ENCODE measurements at regions of chr1 and their contacts with region 1.

Region 1: DNA sequence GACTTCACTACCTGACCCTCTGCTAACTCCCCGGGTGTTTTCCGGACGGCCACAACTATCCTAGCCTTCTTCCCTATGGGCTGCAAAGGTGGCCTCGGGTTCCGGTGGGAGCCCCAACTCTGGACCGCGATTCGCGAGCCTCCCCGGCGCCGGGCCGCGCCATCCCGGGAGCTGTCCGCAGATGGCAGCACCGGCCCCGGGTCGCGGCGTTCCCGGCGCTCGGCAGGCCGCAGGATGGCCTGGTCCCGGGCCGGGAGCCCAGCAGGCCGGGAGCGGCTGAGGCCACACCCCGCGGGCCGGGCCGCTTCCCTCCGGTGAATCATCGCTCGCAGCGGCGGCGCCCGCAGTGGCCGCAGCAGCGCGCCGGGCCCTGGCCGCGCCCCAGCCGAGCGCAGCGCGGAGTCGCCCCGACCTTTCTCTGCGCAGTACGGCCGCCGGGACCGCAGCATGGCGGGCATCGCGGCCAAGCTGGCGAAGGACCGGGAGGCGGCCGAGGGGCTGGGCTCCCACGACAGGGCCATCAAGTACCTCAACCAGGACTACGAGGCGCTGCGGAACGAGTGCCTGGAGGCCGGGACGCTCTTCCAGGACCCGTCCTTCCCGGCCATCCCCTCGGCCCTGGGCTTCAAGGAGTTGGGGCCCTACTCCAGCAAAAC is at the start of gene CAPN2:
- DNase-seq: peak; percentile 83
- H3K4me3 ChIP-seq: peak within 1 kb of the TSS; percentile 85 to 97 (median 90)
- H3K27ac ChIP-seq: peak within 1 kb of the TSS; percentile 84
- H3K4me1 ChIP-seq: peaks cover 66% of the 10 kb centered on the region
- H3K27me3 ChIP-seq: no peaks in the 10 kb centered on the region
- CTCF ChIP-seq: peak; percentile 63
- POLR2A ChIP-seq: peak; percentile 93
- total RNA-seq, gene CAPN2: 316 and 420 TPM in 2 replicates

Region 2: DNA sequence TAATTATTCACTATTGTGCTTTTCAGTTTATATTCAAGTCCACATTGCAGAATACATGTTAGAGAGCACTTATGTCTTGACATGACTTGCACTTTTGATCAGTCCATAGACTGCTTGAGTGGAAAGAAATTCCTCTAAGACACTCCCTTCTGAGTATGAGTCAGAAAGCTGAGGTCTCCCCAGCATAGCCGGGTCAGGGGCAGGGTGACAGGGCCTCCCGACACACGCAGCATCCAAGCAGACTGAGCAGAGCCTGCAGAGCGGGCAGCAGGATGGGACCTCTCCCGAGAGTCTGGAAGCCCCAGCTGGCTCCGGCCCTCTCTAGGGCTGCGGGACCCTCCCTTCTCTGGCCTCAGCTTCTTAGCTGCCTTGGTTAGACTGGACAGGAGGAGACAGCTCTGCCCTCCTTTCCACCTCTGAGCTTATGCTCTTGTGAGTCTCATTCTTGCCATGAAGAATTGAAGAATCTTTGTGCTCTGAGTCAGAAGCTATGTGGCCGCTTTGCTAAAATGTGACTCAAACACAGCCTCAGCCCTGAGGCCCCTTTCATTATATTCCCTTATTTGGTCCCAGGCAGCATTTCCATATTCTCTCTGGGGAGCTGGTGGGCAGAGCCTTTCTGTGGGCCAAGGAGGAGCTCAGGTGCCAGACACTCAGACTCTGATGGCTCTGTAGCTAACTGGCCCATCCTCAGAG is 11.2 kb before region 1 on chr1:
- CTCF ChIA-PET with region 1: interaction called, 21 read pairs
- POLR2A ChIA-PET with region 1: no interaction called
- dilution Hi-C with region 1: no loop called
- intact Hi-C with region 1: no loop called
- DNase-seq: peak; percentile 74
- H3K4me3 ChIP-seq: no peak overlapping the region
- H3K27ac ChIP-seq: peak overlapping the region; percentile 73
- H3K4me1 ChIP-seq: peaks cover 37% of the 10 kb centered on the region
- H3K27me3 ChIP-seq: no peaks in the 10 kb centered on the region
- CTCF ChIP-seq: no peak
- POLR2A ChIP-seq: peak; percentile 26

Region 3: GRCh38 chr1:223741871-223742270 is 29.5 kb after region 1 on chr1:
- CTCF ChIA-PET with region 1: interaction called, 17 read pairs
- POLR2A ChIA-PET with region 1: interaction called, 3 read pairs
- dilution Hi-C with region 1: no loop called
- intact Hi-C with region 1: loop called (anchors 1 kb)
- DNase-seq: peak; percentile 72
- H3K4me3 ChIP-seq: no peak overlapping the region
- H3K27ac ChIP-seq: peak overlapping the region; percentile 63
- H3K4me1 ChIP-seq: peaks cover 42% of the 10 kb centered on the region
- H3K27me3 ChIP-seq: no peaks in the 10 kb centered on the region
- CTCF ChIP-seq: no peak
- POLR2A ChIP-seq: no peak

Region 4: GRCh38 chr1:223771814-223772770 is 59.8 kb after region 1 on chr1:
- CTCF ChIA-PET with region 1: interaction called, 6 read pairs
- POLR2A ChIA-PET with region 1: interaction called, 3 read pairs
- dilution Hi-C with region 1: no loop called
- intact Hi-C with region 1: loop called (anchors 1 kb)
- DNase-seq: peak; percentile 95
- H3K4me3 ChIP-seq: peak overlapping the region in 1 of 3 experiments; percentile 2
- H3K27ac ChIP-seq: peak overlapping the region; percentile 78
- H3K4me1 ChIP-seq: peaks cover 68% of the 10 kb centered on the region
- H3K27me3 ChIP-seq: no peaks in the 10 kb centered on the region
- CTCF ChIP-seq: no peak
- POLR2A ChIP-seq: no peak

Region 5: DNA sequence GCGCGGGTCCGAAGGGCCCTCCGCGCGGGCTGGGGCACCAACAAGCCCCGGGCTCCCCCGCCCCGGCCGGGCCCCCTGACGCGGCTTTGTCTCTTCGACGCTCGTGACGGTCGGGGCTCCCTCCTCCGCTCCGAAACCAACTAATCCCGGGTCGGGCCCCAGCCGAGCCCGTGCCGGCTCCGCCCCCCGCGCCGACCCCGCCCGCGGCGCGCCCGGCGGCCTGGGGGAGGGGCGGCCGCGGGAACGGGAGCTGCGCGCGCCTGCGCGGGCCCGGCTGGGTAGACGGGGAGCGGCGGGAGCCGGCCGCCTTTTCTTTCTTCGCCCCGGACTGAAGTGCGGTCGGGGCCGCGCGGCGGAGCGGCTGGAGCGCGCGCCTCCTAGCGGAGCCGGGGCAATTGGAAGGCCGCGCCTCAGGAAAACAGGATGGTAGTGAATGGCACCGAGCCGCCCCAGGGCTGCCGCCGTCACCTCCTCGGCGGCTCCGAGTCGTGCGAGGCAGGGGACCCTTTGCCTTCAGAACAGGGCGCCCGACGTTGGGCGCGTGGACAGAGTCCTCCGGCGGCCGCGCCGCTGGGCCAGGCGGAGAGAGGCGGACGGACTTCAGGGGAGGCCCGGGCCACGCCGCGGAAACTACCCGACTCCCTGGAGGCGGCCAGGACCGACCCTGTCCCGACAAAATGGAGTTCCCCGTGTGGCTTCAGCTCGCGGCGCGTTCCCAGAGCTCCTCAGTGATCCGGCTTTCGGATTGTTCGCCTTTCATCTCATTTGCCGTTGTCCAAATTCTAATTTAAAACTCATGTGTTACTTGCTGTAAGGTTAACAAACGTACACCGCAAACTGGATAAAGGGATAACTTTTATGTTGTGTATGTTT is 133.7 kb after region 1 on chr1 and contains the start of gene TP53BP2:
- CTCF ChIA-PET with region 1: no interaction called
- POLR2A ChIA-PET with region 1: no interaction called
- dilution Hi-C with region 1: no loop called
- intact Hi-C with region 1: loop called (anchors 1 kb)
- DNase-seq: peak; percentile 92
- H3K4me3 ChIP-seq: peak within 1 kb of the TSS; percentile 79 to 82 (median 81)
- H3K27ac ChIP-seq: peak within 1 kb of the TSS; percentile 99
- H3K4me1 ChIP-seq: peaks cover 18% of the 10 kb centered on the region
- H3K27me3 ChIP-seq: no peaks in the 10 kb centered on the region
- CTCF ChIP-seq: peak; percentile 58 to 84
- POLR2A ChIP-seq: peak; percentile 54
- total RNA-seq, gene TP53BP2: 43.2 and 51.9 TPM in 2 replicates

Measured in endothelial cell of umbilical vein (primary cell).